A549 (cell line): ENCODE measurements at regions of chr9 and their contacts with region 1.

Region 1: DNA sequence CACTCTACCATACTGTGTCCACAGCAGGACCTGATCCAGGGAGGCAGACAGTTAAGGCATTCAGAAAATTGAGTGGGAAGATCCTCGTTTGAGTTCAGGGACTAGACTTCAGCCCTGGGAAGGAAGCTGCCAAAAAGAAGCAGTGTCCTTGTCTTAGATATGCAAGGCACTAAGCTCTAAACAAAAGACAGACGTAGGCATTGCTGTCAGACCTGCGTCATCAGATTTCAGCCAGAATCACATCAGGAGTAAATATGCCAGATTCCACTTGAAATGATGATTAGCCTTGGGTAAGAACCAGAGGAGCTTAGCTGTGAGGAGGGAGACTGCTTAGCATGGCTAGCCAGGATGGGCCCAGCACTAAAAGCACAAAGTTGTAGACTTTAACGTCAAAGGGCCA is 56.7 kb downstream of the MAMDC2 start:
- DNase-seq: peak in 1 of 2 experiments; percentile 46
- ATAC-seq: peak in 1 of 2 experiments; percentile 48; a peak in 3 of 6 replicates
- H3K4me3 ChIP-seq: no peak overlapping the region
- H3K27ac ChIP-seq: no peak overlapping the region
- H3K4me1 ChIP-seq: no peaks in the 10 kb centered on the region
- CTCF ChIP-seq: no peak
- EP300 ChIP-seq: no peak
- POLR2A ChIP-seq: no peak
- RAD21 ChIP-seq: no peak

Region 2: DNA sequence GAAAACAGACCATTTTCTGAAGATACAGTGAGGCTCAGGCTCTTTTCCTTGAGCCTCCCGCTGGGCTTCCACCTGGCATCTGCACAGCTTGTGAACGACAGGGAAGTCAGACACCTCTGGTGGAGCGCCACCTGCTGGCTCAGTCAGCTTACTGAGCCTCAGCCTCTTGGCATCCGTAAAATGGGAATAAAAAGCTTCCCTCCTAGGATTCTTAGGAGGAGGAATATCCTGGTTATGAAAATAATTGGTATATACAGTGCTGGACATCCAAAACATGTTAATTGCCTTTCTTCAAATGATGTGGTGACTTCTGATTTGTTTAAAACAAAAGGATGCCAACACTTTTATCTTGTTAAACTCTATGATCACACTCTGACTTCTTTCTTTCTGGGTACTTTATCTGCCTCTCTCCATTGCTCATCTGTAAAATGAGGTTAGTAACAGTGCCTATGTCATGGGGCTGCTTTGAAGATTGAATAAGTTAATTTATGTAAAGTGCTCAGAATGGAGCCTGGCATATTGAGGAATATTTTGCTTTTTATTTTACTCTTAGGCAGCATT is 10.8 kb after region 1 on chr9:
- CTCF ChIA-PET with region 1: interaction called, 29 read pairs
- POLR2A ChIA-PET with region 1: no interaction called
- DNase-seq: peak; percentile 27 to 66
- ATAC-seq: peak in 1 of 2 experiments; percentile 85; a peak in 4 of 6 replicates
- H3K4me3 ChIP-seq: no peak overlapping the region
- H3K27ac ChIP-seq: no peak overlapping the region
- H3K4me1 ChIP-seq: no peaks in the 10 kb centered on the region
- CTCF ChIP-seq: peak; percentile 69
- EP300 ChIP-seq: no peak
- POLR2A ChIP-seq: no peak
- RAD21 ChIP-seq: peak; percentile 47 to 56; a peak in 4 of 5 replicates

Region 3: DNA sequence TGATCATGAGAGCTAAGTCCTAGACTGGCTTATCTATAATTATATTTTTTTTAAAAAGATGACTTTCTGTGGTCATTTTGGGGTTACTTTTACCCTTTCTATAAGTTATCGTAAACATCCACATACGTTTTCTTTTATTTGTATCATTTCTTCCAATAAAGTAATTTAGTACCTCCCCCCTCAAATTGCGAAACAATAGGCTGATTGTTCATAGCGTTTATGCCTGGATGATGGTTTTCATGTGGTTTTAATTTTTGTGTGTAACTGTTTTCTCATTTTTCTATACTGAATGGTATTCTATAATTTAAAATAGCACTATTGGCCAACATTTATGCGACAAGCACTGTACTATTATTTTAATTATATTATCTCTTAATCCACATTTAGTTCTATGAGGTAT is 202.9 kb after region 1 on chr9:
- CTCF ChIA-PET with region 1: no interaction called
- POLR2A ChIA-PET with region 1: no interaction called
- DNase-seq: no peak
- ATAC-seq: no peak
- H3K4me3 ChIP-seq: no peak overlapping the region
- H3K27ac ChIP-seq: no peak overlapping the region
- H3K4me1 ChIP-seq: no peaks in the 10 kb centered on the region
- CTCF ChIP-seq: no peak
- EP300 ChIP-seq: no peak
- POLR2A ChIP-seq: no peak
- RAD21 ChIP-seq: no peak

Region 4: DNA sequence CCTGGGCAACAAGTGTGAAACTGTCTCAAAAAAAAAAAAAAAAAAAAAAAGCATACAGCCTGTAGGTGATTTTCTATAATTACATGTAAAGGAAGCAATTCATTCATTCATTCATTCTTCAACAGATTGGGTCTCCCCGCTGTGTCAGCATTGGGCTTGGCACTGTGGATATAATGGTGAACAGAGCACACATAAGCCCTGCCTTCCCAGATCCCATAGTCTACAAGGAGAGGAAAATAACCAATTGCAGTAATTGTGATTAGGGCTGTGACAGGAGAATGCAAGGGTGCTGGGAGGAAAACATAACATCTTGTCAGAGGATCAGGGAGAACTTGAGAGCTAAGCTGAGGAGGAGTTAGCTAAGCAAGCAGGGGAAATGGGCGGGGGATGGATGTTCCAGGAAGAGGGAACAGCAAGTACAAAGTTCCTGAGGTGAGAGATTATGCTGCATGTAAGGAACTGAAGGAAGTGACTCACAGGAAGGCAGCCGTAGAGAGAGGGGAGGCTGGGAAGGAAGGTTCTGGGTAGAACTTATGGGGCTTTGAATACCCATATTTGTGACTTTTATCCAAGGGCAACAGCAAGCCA is 338.1 kb after region 1 on chr9:
- CTCF ChIA-PET with region 1: no interaction called
- POLR2A ChIA-PET with region 1: no interaction called
- DNase-seq: peak; percentile 32 to 77
- ATAC-seq: peak; percentile 77 to 87
- H3K4me3 ChIP-seq: no peak overlapping the region
- H3K27ac ChIP-seq: peak overlapping the region; percentile 51 to 72
- H3K4me1 ChIP-seq: peaks cover 44% of the 10 kb centered on the region
- CTCF ChIP-seq: no peak
- EP300 ChIP-seq: no peak
- POLR2A ChIP-seq: no peak
- RAD21 ChIP-seq: no peak